ENCODE measurements at regions of chr14 and their contacts with region 1.

Region 1: DNA sequence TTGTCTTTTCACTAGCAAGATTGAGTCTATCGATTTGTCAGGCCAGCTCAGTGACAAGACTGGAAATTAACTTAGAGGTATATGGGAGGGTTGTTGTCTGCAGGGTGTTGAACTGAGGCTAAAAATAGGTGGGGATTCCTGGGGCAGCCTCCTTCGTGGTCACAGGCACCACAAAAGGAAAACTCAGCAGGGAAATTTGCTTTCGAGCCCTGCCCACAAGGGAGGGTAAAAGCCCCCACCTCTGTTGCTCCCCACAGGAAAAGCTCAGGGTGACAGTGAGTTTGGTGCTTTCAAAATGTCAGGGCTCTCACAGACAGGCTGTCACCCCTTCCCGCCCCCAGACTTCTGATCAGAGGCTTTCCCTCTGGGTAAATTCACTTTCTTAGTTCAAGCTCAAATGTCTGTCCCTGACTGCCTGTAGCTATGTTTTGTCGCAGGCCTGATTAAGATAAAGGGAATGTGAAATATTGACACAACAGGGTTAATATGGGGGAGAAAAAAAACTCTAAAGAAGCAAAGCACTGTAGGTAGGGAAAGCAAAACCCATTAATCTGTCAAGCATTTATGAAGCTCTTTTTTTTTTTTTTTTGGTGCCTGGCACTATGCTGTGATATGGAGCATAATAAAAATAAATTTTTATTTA is 11.7 kb upstream of the NFKBIA start:
- DNase-seq: peak; percentile 89
- H3K4me3 Mint-ChIP-seq: peak overlapping the region; percentile 70
- H3K27ac Mint-ChIP-seq: peak overlapping the region; percentile 92
- H3K4me1 Mint-ChIP-seq: peaks cover 41% of the 10 kb centered on the region
- H3K27me3 Mint-ChIP-seq: no peaks in the 10 kb centered on the region

Region 2: DNA sequence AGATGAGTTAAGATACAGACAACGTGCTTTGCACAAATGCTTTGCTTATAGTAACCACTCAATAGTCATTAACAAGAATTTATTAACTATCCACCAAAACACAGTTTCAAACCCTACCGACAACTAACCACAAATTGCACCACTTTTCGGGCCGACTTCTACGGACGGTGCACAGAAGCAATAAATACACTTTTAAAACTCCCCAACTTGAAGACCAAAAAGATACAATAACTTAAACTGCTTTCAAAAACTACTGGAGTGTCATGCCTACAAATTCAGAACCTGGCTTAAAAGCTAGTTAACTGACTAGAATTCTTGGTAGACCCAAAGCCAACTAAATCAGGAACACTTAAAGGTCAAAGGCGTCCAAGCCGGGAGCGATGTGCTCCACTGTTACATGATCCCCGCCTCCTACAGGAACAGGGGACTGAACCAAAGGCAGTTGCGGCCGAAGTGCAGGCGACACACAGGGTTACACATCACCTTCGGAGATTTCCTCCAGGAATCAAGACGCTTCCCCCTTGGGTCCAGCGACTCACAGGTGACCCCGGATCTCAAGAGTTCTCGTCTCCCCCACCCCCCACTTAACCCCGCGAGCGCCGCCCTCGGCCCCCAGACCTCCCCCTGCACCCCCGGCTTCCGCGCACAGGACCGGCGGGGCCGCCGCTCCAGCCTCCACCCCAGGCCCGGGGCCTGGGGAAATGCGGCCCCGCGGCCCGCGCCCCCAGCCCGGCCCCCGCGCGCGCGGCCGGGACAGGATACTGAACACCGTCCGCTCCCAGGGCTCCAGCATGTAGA is 954.7 kb before region 1 on chr14:
- CTCF ChIA-PET with region 1: no interaction called
- POLR2A ChIA-PET with region 1: no interaction called
- intact Hi-C with region 1: loop called (anchors 10 kb)
- DNase-seq: peak; percentile 46
- H3K4me3 Mint-ChIP-seq: peak overlapping the region; percentile 91
- H3K27ac Mint-ChIP-seq: peak overlapping the region; percentile 76
- H3K4me1 Mint-ChIP-seq: peaks cover 14% of the 10 kb centered on the region
- H3K27me3 Mint-ChIP-seq: no peaks in the 10 kb centered on the region

Region 3: DNA sequence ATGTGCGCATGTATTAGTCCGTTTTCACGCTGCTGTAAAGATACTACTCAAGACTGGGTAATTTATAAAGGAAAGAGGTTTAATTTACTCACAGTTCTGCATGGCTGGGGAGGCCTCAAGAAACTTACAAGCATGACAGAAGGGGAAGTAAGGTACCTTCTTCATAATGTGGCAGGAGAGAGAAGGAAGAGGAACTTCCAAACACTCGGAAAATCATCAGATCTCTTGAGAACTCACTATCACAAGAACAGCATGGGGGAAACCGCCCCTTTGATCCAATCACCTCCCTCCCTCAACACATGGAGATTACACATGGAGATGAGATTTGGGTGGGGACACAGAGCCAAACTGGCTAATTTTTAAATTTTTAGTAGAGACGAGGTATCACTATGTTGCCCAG is 744.5 kb before region 1 on chr14:
- CTCF ChIA-PET with region 1: interaction called, 7 read pairs
- POLR2A ChIA-PET with region 1: interaction called, 5 read pairs
- intact Hi-C with region 1: loop called (anchors 1 kb)
- DNase-seq: no peak
- H3K4me3 Mint-ChIP-seq: no peak overlapping the region
- H3K27ac Mint-ChIP-seq: no peak overlapping the region
- H3K4me1 Mint-ChIP-seq: peaks cover 3% of the 10 kb centered on the region
- H3K27me3 Mint-ChIP-seq: no peaks in the 10 kb centered on the region

Region 4: GRCh38 chr14:34931206-34931605 is 485.0 kb before region 1 on chr14:
- CTCF ChIA-PET with region 1: no interaction called
- POLR2A ChIA-PET with region 1: no interaction called
- intact Hi-C with region 1: loop called (anchors 5 kb)
- DNase-seq: peak; percentile 50
- H3K4me3 Mint-ChIP-seq: peak overlapping the region; percentile 64
- H3K27ac Mint-ChIP-seq: peak overlapping the region; percentile 92
- H3K4me1 Mint-ChIP-seq: peaks cover 46% of the 10 kb centered on the region
- H3K27me3 Mint-ChIP-seq: no peaks in the 10 kb centered on the region

Region 5: GRCh38 chr14:35121887-35122695 is 294.1 kb before region 1 on chr14 and contains the starts of genes PPP2R3C and PRORP:
- CTCF ChIA-PET with region 1: interaction called, 5 read pairs
- POLR2A ChIA-PET with region 1: interaction called, 7 read pairs
- intact Hi-C with region 1: loop called (anchors 1 kb)
- DNase-seq: peak; percentile 93
- H3K4me3 Mint-ChIP-seq: peak within 1 kb of the TSS; percentile 82
- H3K27ac Mint-ChIP-seq: peak within 1 kb of the TSS; percentile 99
- H3K4me1 Mint-ChIP-seq: peaks cover 55% of the 10 kb centered on the region
- H3K27me3 Mint-ChIP-seq: no peaks in the 10 kb centered on the region
- total RNA-seq, gene PPP2R3C: 48.9 to 51.8 TPM
- total RNA-seq, gene PRORP: 43.4 to 44.6 TPM

Region 6: GRCh38 chr14:35229495-35230089 is 186.6 kb before region 1 on chr14:
- CTCF ChIA-PET with region 1: interaction called, 67 read pairs
- POLR2A ChIA-PET with region 1: interaction called, 6 read pairs
- intact Hi-C with region 1: no loop called
- DNase-seq: no peak
- H3K4me3 Mint-ChIP-seq: no peak overlapping the region
- H3K27ac Mint-ChIP-seq: peak overlapping the region; percentile 26
- H3K4me1 Mint-ChIP-seq: peaks cover 23% of the 10 kb centered on the region
- H3K27me3 Mint-ChIP-seq: no peaks in the 10 kb centered on the region

Region 7: GRCh38 chr14:35320472-35320871 is 95.8 kb before region 1 on chr14:
- CTCF ChIA-PET with region 1: interaction called, 7 read pairs
- POLR2A ChIA-PET with region 1: interaction called, 18 read pairs
- intact Hi-C with region 1: no loop called
- DNase-seq: no peak
- H3K4me3 Mint-ChIP-seq: no peak overlapping the region
- H3K27ac Mint-ChIP-seq: no peak overlapping the region
- H3K4me1 Mint-ChIP-seq: no peaks in the 10 kb centered on the region
- H3K27me3 Mint-ChIP-seq: no peaks in the 10 kb centered on the region

Region 8: DNA sequence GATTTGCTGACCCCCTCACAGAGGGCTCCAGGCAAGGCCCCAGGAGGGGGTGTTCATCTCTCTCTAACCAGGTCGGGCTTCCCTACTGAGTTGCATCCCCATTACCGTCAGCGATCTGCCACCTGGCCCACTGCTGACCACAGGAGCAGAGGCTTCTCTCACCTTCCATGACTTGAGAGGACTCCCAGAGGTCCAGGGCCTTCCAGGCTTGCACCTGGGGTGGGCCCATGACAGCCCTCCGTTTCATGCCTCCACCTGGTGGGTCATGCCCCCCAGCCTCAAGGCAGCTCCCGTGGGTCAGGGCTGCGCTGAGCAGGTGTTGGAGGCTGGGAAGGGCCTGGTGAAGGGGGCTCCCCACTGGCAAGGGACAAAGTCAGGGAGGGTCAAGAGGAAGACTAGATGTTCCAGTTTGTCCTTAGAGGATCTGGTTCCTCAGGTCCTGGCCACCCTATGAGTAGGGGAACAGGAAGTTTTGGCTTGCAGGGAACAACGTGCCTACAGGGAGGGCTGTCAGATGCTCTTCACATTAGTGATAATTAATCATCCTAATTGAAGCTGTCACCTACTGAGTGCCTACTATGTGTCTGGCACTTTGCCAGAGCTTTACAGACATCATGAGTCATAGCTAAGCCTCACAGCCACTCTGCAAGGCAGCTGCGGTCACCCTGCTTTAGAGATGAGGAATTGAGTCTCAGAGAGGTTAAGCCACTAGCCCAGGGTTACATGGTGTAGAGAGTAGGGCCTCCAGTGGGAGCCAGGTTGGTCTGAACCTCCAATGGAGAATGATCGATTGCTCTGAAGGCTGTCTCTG is 25.4 kb before region 1 on chr14:
- CTCF ChIA-PET with region 1: no interaction called
- POLR2A ChIA-PET with region 1: no interaction called
- intact Hi-C with region 1: no loop called
- DNase-seq: peak; percentile 45
- H3K4me3 Mint-ChIP-seq: no peak overlapping the region
- H3K27ac Mint-ChIP-seq: no peak overlapping the region
- H3K4me1 Mint-ChIP-seq: peaks cover 4% of the 10 kb centered on the region
- H3K27me3 Mint-ChIP-seq: no peaks in the 10 kb centered on the region

Region 9: GRCh38 chr14:35458442-35458841 is 42.2 kb after region 1 on chr14:
- CTCF ChIA-PET with region 1: no interaction called
- POLR2A ChIA-PET with region 1: no interaction called
- intact Hi-C with region 1: no loop called
- DNase-seq: no peak
- H3K4me3 Mint-ChIP-seq: no peak overlapping the region
- H3K27ac Mint-ChIP-seq: no peak overlapping the region
- H3K4me1 Mint-ChIP-seq: no peaks in the 10 kb centered on the region
- H3K27me3 Mint-ChIP-seq: no peaks in the 10 kb centered on the region

Region 10: GRCh38 chr14:36423430-36423829 is 1007.2 kb after region 1 on chr14:
- CTCF ChIA-PET with region 1: no interaction called
- POLR2A ChIA-PET with region 1: no interaction called
- intact Hi-C with region 1: no loop called
- DNase-seq: no peak
- H3K4me3 Mint-ChIP-seq: no peak overlapping the region
- H3K27ac Mint-ChIP-seq: no peak overlapping the region
- H3K4me1 Mint-ChIP-seq: no peaks in the 10 kb centered on the region
- H3K27me3 Mint-ChIP-seq: peaks cover 2% of the 10 kb centered on the region

Measured in activated CD4-positive, alpha-beta memory T cell treated with anti-CD3 and anti-CD28 coated beads for 36 hours (primary cell).